Activated CD4-positive, alpha-beta T cell treated with anti-CD3 and anti-CD28 coated beads for 36 hours (primary cell): ENCODE measurements at regions of chr13 and their contacts with region 1.

Region 1: GRCh38 chr13:78022164-78022877 is 103.7 kb upstream of the EDNRB start:
- DNase-seq: peak; percentile 69
- ATAC-seq: peak; percentile 99
- H3K4me3 Mint-ChIP-seq: no peak overlapping the region
- H3K27ac Mint-ChIP-seq: no peak overlapping the region
- H3K4me1 Mint-ChIP-seq: peaks cover 6% of the 10 kb centered on the region
- H3K27me3 Mint-ChIP-seq: peaks cover 3% of the 10 kb centered on the region

Region 2: GRCh38 chr13:77868714-77869113 is 153.6 kb before region 1 on chr13:
- CTCF ChIA-PET with region 1: no interaction called
- POLR2A ChIA-PET with region 1: no interaction called
- intact Hi-C with region 1: loop called in 1 of 2 experiments (anchors 2 kb)
- DNase-seq: peak; percentile 6
- ATAC-seq: peak; percentile 90
- H3K4me3 Mint-ChIP-seq: no peak overlapping the region
- H3K27ac Mint-ChIP-seq: peak overlapping the region; percentile 66
- H3K4me1 Mint-ChIP-seq: peaks cover 6% of the 10 kb centered on the region
- H3K27me3 Mint-ChIP-seq: peaks cover 4% of the 10 kb centered on the region

Region 3: DNA sequence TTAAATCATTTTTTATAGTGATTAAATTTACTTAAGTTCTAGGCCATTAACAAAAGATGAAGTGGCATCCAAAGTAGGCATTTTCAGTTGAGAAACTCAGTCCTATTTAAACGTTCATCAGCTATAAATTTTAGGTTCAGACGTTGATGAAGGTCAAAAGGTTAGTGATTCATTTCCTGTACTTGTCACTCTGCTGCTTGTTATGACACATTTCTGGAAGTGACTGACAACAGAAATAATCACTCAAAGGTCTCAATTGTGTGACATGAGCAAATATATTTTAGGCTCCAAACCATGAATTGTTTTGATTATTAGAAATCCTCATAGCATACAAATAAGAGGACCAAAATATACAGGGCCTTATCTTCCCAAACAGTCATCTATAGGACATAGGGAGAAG is 93.4 kb before region 1 on chr13:
- CTCF ChIA-PET with region 1: no interaction called
- POLR2A ChIA-PET with region 1: no interaction called
- intact Hi-C with region 1: loop called (anchors 1 to 2 kb)
- DNase-seq: no peak
- ATAC-seq: peak; percentile 69
- H3K4me3 Mint-ChIP-seq: no peak overlapping the region
- H3K27ac Mint-ChIP-seq: no peak overlapping the region
- H3K4me1 Mint-ChIP-seq: peaks cover 10% of the 10 kb centered on the region
- H3K27me3 Mint-ChIP-seq: peaks cover 16% of the 10 kb centered on the region